ENCODE measurements at regions of chr20 and their contacts with region 1.

Region 1: DNA sequence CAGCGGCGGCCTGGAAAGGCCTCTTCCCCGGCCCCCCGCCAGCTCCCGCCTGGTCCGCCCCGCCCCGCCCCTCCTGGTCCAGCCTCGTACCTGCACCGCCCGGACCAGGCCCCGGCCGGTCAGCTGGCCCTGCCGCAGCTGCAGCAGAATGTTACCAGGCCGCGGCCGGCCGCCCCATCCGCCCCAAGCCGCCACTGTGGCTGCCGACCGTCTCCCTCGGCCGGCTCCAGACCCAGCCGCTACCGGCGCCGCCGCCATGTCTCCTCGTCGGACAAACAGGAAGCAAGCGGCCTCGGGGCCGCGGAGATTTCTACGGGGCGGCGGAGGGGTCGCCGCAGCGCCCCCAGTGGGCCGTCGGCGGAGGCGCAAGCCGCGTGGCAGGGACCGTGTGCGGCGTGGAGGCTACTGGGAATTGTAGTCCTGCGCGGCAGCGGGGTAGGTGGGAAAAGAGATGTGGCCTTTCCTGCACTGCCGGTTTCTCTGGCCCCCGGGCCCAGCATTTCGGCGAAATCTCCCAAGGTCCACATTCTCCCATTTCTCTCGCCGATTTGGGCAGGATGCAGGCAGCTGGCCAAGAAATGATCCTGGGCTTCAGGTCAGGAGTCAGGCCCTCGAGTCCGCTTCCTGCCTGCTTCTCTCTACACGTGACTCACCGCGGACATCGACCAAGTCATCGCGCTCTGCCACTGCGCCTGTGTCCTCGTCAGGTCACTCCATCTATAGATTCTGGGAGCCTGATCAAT is at the start of gene TRPC4AP:
- DNase-seq: peak; percentile 89 to 96 (median 91)
- ATAC-seq: peak; percentile 85 to 97 (median 94)
- H3K4me3 ChIP-seq: peak within 1 kb of the TSS; percentile 68 to 97 (median 84)
- H3K27ac ChIP-seq: peak within 1 kb of the TSS; percentile 76 to 97 (median 92)
- H3K4me1 ChIP-seq: peaks cover 4 to 47% (median 35%) of the 10 kb centered on the region in 12 donors
- H3K27me3 ChIP-seq: no peaks in the 10 kb centered on the region
- CTCF ChIP-seq: peak in 11 of 12 donors; percentile 94 to 99 (median 97)
- POLR2A ChIP-seq: peak in 1 of 2 donors; percentile 63
- total RNA-seq, gene TRPC4AP: 31.5 to 51.8 (median 38.6) TPM

Region 2: DNA sequence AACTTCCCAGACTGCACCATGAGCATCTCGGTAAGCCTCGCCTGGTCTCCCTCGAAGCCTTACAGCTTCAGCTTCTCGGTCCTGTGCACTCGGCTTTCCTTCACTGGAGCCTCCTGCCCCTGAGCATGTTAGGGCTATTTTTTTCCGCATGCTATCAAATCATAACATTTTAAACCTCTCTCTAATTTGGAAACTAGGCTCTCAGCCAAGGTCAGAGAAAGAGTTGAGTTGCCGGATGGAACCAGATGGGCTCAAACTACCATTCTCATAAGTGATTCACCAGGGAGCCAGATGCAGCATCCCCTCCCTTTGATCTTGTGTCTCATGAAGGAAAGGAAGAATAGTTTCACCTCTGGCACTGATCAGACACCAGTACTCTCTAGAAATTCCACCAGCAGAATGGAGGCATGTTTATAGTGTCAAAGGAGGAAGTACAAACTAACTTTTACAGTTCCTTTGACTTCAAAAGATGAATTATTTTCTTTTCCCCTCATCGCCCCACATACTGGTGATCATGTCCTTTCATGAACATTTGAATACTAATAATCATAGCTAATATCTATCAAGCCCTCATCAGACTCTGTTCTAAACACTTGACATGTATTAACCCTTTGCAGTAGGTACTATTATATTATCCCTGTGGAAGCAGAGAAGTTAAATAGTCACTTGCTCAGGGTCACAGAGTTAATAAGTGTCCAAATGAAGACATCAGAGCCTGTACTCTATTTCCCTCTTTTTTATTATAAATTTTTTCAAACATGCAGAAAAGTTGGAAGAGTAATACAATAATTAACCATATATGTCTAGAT is 487.5 kb before region 1 on chr20:
- intact Hi-C with region 1: no loop called
- DNase-seq: peak in 2 of 5 donors; percentile 36 to 38
- ATAC-seq: peak in 3 of 4 donors; percentile 67 to 78 (median 69)
- H3K4me3 ChIP-seq: peak overlapping the region in 1 of 12 donors; percentile 9
- H3K27ac ChIP-seq: peak overlapping the region in 11 of 12 donors; percentile 16 to 72 (median 39)
- H3K4me1 ChIP-seq: peaks cover 0 to 37% (median 22%) of the 10 kb centered on the region in 12 donors
- H3K27me3 ChIP-seq: no peaks in the 10 kb centered on the region
- CTCF ChIP-seq: no peak
- POLR2A ChIP-seq: no peak

Region 3: GRCh38 chr20:34955232-34956040 is 137.3 kb before region 1 on chr20 and contains the starts of genes GSS and MYH7B:
- intact Hi-C with region 1: loop called in 1 of 10 experiments (anchors 10 kb)
- DNase-seq: peak; percentile 97 to 99 (median 98)
- ATAC-seq: peak; percentile 94 to 97 (median 96)
- H3K4me3 ChIP-seq: peak within 1 kb of the TSS; percentile 42 to 85 (median 70)
- H3K27ac ChIP-seq: peak within 1 kb of the TSS; percentile 84 to 96 (median 94)
- H3K4me1 ChIP-seq: peaks cover 0 to 31% (median 20%) of the 10 kb centered on the region in 12 donors
- H3K27me3 ChIP-seq: no peaks in the 10 kb centered on the region
- CTCF ChIP-seq: peak in 11 of 12 donors; percentile 21 to 69 (median 51)
- POLR2A ChIP-seq: peak in 1 of 2 donors; percentile 79
- total RNA-seq, gene GSS: 17.8 to 38.1 (median 26.8) TPM
- total RNA-seq, gene MYH7B: 50.7 to 306 (median 144) TPM

Region 4: DNA sequence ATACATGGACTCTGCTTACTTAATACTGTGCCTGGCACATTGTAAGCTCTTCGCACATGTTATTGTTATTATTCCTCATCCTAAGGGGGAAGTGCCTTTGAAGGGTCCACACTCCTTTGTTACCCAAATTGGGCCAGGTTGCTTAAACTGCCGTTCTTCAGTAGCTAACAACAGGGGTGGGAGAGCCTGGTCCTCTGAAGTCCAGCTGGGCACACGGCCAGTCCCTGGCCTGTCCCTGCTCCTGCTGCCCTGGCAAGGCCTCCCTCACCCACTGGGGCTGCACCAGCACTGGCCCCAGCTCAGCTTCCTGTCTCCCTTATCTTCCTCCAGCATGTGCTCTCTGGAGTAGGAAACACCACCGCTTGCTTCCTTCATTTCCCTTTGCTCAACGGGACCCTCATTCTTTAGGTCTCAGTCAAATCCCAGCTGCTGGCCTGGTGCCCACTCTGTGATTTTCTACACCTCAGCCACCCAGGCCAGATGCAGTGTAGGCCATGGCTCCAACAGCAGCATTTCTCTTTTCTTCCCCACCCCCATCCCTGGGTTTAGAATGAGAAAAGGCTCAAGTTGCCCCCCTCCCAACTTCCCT is 73.6 kb after region 1 on chr20:
- intact Hi-C with region 1: loop called in 1 of 10 experiments (anchors 2 kb)
- DNase-seq: peak; percentile 67 to 79 (median 72)
- ATAC-seq: peak; percentile 86 to 97 (median 95)
- H3K4me3 ChIP-seq: no peak overlapping the region
- H3K27ac ChIP-seq: peak overlapping the region in 10 of 12 donors; percentile 2 to 57 (median 38)
- H3K4me1 ChIP-seq: peaks cover 0 to 29% (median 17%) of the 10 kb centered on the region in 12 donors
- H3K27me3 ChIP-seq: no peaks in the 10 kb centered on the region
- CTCF ChIP-seq: no peak
- POLR2A ChIP-seq: no peak

Region 5: DNA sequence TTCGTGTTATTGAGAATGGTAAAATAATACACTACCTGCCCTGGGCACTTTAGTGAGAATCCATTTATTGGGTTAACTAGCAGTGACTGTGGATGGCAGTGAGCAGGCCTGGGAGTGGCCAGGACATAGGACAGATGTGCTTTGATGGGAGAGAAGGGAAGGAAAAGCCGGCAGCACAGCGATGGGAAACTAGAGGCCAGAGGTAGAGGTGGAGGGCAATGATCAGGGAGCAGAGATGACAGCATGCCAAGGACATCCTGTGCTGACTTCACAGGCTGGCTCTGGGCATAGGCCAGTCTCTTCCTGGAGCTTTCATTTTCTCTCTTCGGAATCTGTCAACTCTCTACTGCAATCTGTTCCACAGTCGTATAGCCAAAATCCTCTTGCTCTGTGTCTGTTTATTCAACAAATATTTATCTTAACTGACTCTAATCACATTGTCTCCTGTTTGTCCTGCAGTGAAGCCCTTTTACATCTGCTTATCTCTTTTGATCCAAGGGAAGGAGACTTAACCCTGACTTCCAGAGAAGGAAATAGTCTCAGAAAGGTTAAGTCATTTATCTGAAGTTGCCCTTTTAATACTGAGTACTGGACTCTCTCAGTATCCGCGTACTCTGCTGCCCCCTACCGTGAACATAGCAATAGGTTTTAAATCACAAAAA is 115.4 kb after region 1 on chr20:
- intact Hi-C with region 1: loop called in 9 of 10 experiments (anchors 1 to 5 kb)
- DNase-seq: peak; percentile 78 to 89 (median 83)
- ATAC-seq: peak; percentile 91 to 96 (median 94)
- H3K4me3 ChIP-seq: peak overlapping the region in 8 of 12 donors; percentile 2 to 35 (median 22)
- H3K27ac ChIP-seq: peak overlapping the region; percentile 19 to 80 (median 71)
- H3K4me1 ChIP-seq: peaks cover 0 to 13% (median 6%) of the 10 kb centered on the region in 12 donors
- H3K27me3 ChIP-seq: no peaks in the 10 kb centered on the region
- CTCF ChIP-seq: peak; percentile 75 to 88 (median 82)
- POLR2A ChIP-seq: no peak

Region 6: DNA sequence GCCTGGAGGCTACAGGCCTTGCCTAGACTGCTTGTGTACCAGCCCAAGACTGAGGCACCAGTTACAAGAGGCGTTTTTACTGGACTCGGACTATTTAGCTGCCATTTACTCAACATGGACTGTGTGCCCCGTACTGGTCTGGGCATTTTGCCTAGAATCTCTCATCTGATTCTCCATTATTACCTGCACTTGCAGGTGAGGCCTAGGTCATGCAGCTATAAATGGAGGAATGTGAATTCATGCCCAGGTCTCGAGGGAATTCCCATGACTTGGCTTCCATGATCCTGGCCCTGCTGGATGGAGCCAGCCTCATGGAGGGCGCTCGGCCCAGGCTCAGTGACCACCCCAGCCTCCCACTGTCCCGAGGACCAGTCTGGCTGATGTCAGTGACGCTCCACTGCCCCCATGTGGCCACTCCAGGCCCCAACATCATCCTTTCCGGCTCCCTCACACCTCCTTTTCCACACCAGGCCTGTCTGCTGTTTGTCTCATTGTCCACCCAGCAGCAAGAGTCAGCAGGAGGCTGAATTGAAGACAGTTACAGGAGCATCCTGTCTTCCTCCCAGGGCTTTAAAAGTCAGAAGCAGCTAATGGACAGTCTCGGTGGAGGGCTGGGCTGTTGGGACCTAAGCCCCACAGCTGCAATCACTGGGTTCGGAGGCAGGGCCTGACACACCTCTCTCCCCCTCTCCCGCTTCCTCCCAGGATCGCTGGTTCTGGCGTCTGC is 176.5 kb after region 1 on chr20:
- intact Hi-C with region 1: loop called in 2 of 10 experiments (anchors 1 to 10 kb)
- DNase-seq: peak in 4 of 5 donors; percentile 43 to 66 (median 58)
- ATAC-seq: peak; percentile 34 to 72 (median 70)
- H3K4me3 ChIP-seq: no peak overlapping the region
- H3K27ac ChIP-seq: no peak overlapping the region
- H3K4me1 ChIP-seq: peaks cover 0 to 14% (median 0%) of the 10 kb centered on the region in 12 donors
- H3K27me3 ChIP-seq: no peaks in the 10 kb centered on the region
- CTCF ChIP-seq: peak; percentile 54 to 82 (median 68)
- POLR2A ChIP-seq: no peak

Measured in heart left ventricle (tissue), 16 donors.